ENCODE measurements at regions of chr1 and their contacts with region 1.

Region 1: GRCh38 chr1:204924013-204924967 is 53.6 kb downstream of the NFASC start:
- DNase-seq: peak; percentile 50
- H3K4me3 ChIP-seq: no peak overlapping the region
- H3K27ac ChIP-seq: peak overlapping the region in 1 of 4 donors; percentile 1
- H3K4me1 ChIP-seq: peaks cover 0 to 24% (median 5%) of the 10 kb centered on the region in 4 donors
- H3K27me3 ChIP-seq: no peaks in the 10 kb centered on the region
- CTCF ChIP-seq: no peak
- EP300 ChIP-seq: no peak
- POLR2A ChIP-seq: no peak

Region 2: GRCh38 chr1:204882479-204882878 is 41.8 kb before region 1 on chr1:
- intact Hi-C with region 1: loop called (anchors 5 kb)
- DNase-seq: no peak
- H3K4me3 ChIP-seq: no peak overlapping the region
- H3K27ac ChIP-seq: peak overlapping the region in 3 of 4 donors; percentile 64 to 81 (median 67)
- H3K4me1 ChIP-seq: peaks cover 0 to 86% (median 34%) of the 10 kb centered on the region in 4 donors
- H3K27me3 ChIP-seq: no peaks in the 10 kb centered on the region
- CTCF ChIP-seq: no peak
- EP300 ChIP-seq: no peak
- POLR2A ChIP-seq: no peak

Measured in sigmoid colon (tissue), 7 donors.